ENCODE measurements at regions of chr3 and their contacts with region 1.

Region 1: DNA sequence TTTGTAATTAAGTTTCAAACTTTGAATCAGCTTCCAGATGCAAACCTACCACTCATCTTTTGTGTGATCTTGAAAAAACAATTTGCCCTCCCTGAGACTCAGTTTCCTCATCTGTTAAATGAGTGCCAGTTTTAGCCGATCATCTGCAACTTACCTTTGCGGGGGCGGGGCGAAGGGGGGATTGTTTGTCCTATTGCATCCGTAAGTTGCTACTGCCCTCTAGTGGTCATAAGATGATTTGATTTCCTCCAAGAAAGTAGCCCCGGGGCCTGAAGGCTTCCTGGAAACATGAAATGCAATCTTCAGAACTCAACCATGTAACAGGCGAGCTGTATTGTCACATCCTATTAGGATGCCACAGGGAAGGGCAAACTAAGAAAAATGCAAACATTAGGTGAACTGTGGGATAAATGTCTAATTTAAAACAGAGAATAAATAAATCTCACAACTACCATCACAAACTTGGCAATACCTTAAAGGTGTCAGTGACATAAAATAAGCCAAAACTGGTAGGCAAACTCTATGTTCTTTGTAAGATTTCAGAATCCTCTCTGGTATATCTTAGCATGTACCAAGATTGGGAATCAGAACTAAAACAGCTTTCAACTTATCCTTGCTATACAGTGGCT is 63.5 kb upstream of the CLDN18 start:
- DNase-seq: peak; percentile 57
- H3K4me3 ChIP-seq: no peak overlapping the region
- H3K27ac ChIP-seq: no peak overlapping the region
- H3K4me1 ChIP-seq: no peaks in the 10 kb centered on the region
- H3K27me3 ChIP-seq: no peaks in the 10 kb centered on the region
- CTCF ChIP-seq: peak; percentile 62 to 67
- POLR2A ChIP-seq: no peak

Region 2: DNA sequence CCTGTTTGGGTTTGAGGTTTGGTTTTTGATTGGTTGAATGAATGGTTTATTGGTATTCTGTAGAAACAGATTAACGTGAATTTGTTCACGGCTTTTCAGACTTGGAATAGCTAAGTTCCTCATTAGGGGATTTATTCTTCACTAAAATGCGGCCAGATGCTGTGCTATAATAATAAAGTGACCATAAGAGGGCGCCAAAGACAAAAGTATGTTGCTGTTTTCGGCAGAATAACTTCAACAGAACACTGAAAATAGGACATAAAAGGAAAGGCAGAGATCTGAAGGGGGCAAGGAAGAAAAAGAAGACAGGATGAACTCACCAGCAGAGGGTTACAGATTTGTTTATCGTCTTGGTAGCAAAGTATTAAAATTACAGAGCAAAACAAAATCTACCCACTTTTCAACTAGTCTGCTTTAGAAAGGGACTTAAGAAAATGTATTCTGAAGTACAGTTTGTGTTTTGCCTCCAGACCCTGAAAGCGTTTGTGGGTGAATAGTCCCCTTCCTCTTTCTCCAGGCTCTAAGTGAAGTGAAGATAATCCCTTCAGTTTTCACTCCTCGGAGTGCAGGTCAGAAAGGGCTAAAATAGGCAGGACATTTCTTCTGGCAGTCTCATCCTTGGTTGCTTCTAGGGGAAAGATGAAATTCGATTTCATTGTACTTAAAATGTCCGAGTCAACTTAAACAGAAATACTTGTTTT is 841.0 kb before region 1 on chr3:
- CTCF ChIA-PET with region 1: interaction called, 40 read pairs
- POLR2A ChIA-PET with region 1: no interaction called
- dilution Hi-C with region 1: no loop called
- intact Hi-C with region 1: loop called (anchors 1 kb)
- DNase-seq: peak; percentile 74
- H3K4me3 ChIP-seq: no peak overlapping the region
- H3K27ac ChIP-seq: no peak overlapping the region
- H3K4me1 ChIP-seq: no peaks in the 10 kb centered on the region
- H3K27me3 ChIP-seq: peaks cover 12 to 17% of the 10 kb centered on the region in 2 experiments
- CTCF ChIP-seq: peak; percentile 42 to 50
- POLR2A ChIP-seq: no peak

Region 3: GRCh38 chr3:137217733-137218132 is 728.7 kb before region 1 on chr3:
- CTCF ChIA-PET with region 1: no interaction called
- POLR2A ChIA-PET with region 1: no interaction called
- dilution Hi-C with region 1: no loop called
- intact Hi-C with region 1: loop called (anchors 2 kb)
- DNase-seq: no peak
- H3K4me3 ChIP-seq: no peak overlapping the region
- H3K27ac ChIP-seq: no peak overlapping the region
- H3K4me1 ChIP-seq: no peaks in the 10 kb centered on the region
- H3K27me3 ChIP-seq: no peaks in the 10 kb centered on the region
- CTCF ChIP-seq: peak in 1 of 2 donors; percentile 20
- POLR2A ChIP-seq: no peak

Region 4: DNA sequence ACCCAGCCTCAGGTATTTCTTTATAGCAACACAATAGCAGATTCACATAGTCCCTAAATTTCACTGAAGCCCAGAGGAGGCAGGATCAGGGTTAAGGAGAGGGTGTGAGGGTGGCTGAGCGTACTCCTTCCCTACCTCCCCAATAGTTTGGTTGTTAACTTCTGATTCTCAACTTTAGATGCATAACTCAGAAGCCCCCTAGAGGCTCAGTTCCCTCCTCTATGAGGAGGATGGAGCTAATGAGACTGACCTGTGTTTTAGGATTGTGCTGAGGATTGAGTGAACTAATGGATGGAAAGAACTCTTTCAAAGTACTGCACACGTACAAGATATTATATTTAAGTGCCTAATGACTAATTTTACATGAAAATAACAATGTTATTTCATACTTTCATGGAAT is 431.6 kb before region 1 on chr3:
- CTCF ChIA-PET with region 1: no interaction called
- POLR2A ChIA-PET with region 1: no interaction called
- dilution Hi-C with region 1: no loop called
- intact Hi-C with region 1: no loop called
- DNase-seq: no peak
- H3K4me3 ChIP-seq: no peak overlapping the region
- H3K27ac ChIP-seq: no peak overlapping the region
- H3K4me1 ChIP-seq: no peaks in the 10 kb centered on the region
- H3K27me3 ChIP-seq: no peaks in the 10 kb centered on the region
- CTCF ChIP-seq: no peak
- POLR2A ChIP-seq: no peak

Region 5: DNA sequence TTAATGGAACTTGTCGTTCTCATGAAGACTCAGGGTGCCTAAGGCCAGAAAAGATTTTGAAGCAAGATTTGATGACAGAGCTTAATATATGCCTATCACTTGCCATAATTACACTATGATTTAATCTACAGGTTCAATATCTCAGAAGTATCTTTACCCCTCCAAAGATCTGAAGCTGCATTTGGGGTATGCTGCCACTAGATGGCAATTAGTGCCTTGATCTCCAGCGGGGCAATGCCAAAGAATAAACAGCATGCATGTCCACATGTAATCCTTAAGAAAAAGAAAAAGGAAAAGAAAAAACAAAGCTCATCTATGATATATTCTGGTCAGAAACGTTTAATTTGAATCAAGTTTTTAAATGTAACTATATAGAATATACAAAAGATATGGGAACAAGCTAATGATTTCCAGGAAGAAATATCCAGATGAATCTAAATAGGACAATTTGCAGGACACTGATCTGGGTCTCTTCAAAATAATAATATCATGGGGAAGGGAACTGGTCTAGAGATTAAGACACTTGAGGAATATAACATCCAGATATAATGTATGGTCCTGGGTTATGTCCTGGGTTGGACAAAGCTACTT is 237.4 kb before region 1 on chr3:
- CTCF ChIA-PET with region 1: no interaction called
- POLR2A ChIA-PET with region 1: no interaction called
- dilution Hi-C with region 1: no loop called
- intact Hi-C with region 1: loop called (anchors 5 kb)
- DNase-seq: no peak
- H3K4me3 ChIP-seq: no peak overlapping the region
- H3K27ac ChIP-seq: no peak overlapping the region
- H3K4me1 ChIP-seq: no peaks in the 10 kb centered on the region
- H3K27me3 ChIP-seq: no peaks in the 10 kb centered on the region
- CTCF ChIP-seq: no peak
- POLR2A ChIP-seq: no peak

Region 6: GRCh38 chr3:137978311-137978710 is 31.9 kb after region 1 on chr3:
- CTCF ChIA-PET with region 1: no interaction called
- POLR2A ChIA-PET with region 1: no interaction called
- dilution Hi-C with region 1: no loop called
- intact Hi-C with region 1: no loop called
- DNase-seq: no peak
- H3K4me3 ChIP-seq: no peak overlapping the region
- H3K27ac ChIP-seq: no peak overlapping the region
- H3K4me1 ChIP-seq: no peaks in the 10 kb centered on the region
- H3K27me3 ChIP-seq: peaks cover 0 to 2% of the 10 kb centered on the region in 2 experiments
- CTCF ChIP-seq: no peak
- POLR2A ChIP-seq: no peak